ENCODE measurements at regions of chr15 and their contacts with region 1.

Region 1: GRCh38 chr15:24956111-24956838 is 1.5 kb downstream of the SNRPN start:
- DNase-seq: peak; percentile 64
- H3K4me3 Mint-ChIP-seq: peak overlapping the region; percentile 88
- H3K27ac Mint-ChIP-seq: peak overlapping the region; percentile 91
- H3K4me1 Mint-ChIP-seq: peaks cover 3% of the 10 kb centered on the region
- H3K27me3 Mint-ChIP-seq: no peaks in the 10 kb centered on the region

Region 2: GRCh38 chr15:24752354-24752753 is 203.9 kb before region 1 on chr15:
- intact Hi-C with region 1: no loop called
- DNase-seq: no peak
- H3K4me3 Mint-ChIP-seq: no peak overlapping the region
- H3K27ac Mint-ChIP-seq: no peak overlapping the region
- H3K4me1 Mint-ChIP-seq: no peaks in the 10 kb centered on the region
- H3K27me3 Mint-ChIP-seq: no peaks in the 10 kb centered on the region

Region 3: GRCh38 chr15:24764375-24765171 is 191.7 kb before region 1 on chr15:
- intact Hi-C with region 1: loop called (anchors 5 kb)
- DNase-seq: no peak
- H3K4me3 Mint-ChIP-seq: no peak overlapping the region
- H3K27ac Mint-ChIP-seq: no peak overlapping the region
- H3K4me1 Mint-ChIP-seq: no peaks in the 10 kb centered on the region
- H3K27me3 Mint-ChIP-seq: no peaks in the 10 kb centered on the region

Region 4: GRCh38 chr15:24848050-24848449 is 108.2 kb before region 1 on chr15:
- intact Hi-C with region 1: no loop called
- DNase-seq: no peak
- H3K4me3 Mint-ChIP-seq: no peak overlapping the region
- H3K27ac Mint-ChIP-seq: no peak overlapping the region
- H3K4me1 Mint-ChIP-seq: no peaks in the 10 kb centered on the region
- H3K27me3 Mint-ChIP-seq: no peaks in the 10 kb centered on the region

Region 5: GRCh38 chr15:24919446-24919845 is 36.8 kb before region 1 on chr15:
- intact Hi-C with region 1: no loop called
- DNase-seq: no peak
- H3K4me3 Mint-ChIP-seq: no peak overlapping the region
- H3K27ac Mint-ChIP-seq: no peak overlapping the region
- H3K4me1 Mint-ChIP-seq: peaks cover 4% of the 10 kb centered on the region
- H3K27me3 Mint-ChIP-seq: no peaks in the 10 kb centered on the region

Region 6: DNA sequence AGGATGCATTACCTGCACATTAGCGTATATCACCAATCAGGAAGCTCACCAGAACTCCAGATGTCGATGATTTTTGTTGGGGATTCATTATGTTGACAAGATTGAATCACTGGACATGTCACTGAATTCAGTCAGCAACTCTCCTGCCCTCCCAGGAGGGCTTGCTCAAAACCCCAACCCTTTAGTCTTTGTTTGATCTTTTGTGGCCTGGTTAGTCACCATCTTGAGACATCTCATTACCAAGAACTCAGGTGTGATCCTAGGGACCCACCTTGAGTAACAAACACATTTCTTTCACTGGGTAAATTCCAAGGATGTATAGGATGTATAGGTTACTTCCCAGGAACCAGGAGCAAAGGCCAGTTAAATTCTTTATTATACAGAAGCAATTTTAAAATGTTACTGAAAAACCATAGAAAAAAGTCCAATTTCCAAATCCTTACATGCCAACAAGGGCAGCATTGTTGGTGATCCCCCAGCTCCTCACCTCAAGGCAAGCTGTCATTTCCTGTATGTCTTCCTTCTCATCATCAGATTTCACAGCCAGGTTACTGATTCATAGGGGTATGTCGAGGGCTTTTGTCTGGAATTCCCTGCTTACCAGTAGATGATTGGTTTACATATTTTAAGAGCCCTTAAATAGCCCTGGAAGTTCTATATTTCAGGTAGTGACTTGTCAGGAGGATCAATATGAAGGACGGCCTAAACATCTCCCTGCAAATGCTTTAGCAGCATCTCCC is 10.3 kb after region 1 on chr15:
- intact Hi-C with region 1: no loop called
- DNase-seq: no peak
- H3K4me3 Mint-ChIP-seq: no peak overlapping the region
- H3K27ac Mint-ChIP-seq: no peak overlapping the region
- H3K4me1 Mint-ChIP-seq: no peaks in the 10 kb centered on the region
- H3K27me3 Mint-ChIP-seq: no peaks in the 10 kb centered on the region

Region 7: GRCh38 chr15:26082221-26083109 is 1126.2 kb after region 1 on chr15:
- intact Hi-C with region 1: loop called (anchors 5 kb)
- DNase-seq: peak; percentile 93
- H3K4me3 Mint-ChIP-seq: peak overlapping the region; percentile 85
- H3K27ac Mint-ChIP-seq: peak overlapping the region; percentile 89
- H3K4me1 Mint-ChIP-seq: peaks cover 18% of the 10 kb centered on the region
- H3K27me3 Mint-ChIP-seq: peaks cover 8% of the 10 kb centered on the region